Esophagus muscularis mucosa (tissue), 4 donors: ENCODE measurements at regions of chr20 and their contacts with region 1.

Region 1: DNA sequence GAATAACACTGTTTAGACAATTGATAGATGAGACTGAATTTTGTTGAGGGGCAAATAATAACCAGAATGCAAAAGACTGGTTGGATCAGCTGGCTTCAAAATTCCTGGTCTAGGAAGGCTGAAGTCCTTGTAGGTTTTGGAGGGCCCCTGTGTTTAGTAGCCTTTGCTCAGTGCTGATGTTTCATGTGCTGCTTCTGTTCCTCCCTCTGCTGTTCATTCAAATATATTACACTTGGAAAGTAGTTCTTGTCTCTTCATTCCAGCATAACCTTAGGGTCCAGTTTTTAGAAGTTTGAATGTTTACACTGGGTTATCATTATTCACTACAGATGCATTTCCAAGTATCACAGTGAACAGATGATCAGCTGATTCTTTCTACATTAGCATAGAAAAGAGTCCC is 72.5 kb downstream of the FLRT3 start:
- DNase-seq: no peak
- H3K4me3 ChIP-seq: no peak overlapping the region
- H3K27ac ChIP-seq: no peak overlapping the region
- H3K4me1 ChIP-seq: peaks cover 0 to 11% (median 0%) of the 10 kb centered on the region in 4 donors
- H3K27me3 ChIP-seq: no peaks in the 10 kb centered on the region
- CTCF ChIP-seq: peak in 2 of 3 experiments; percentile 26 to 36
- EP300 ChIP-seq: no peak
- POLR2A ChIP-seq: no peak

Region 2: GRCh38 chr20:14189794-14190402 is 75.0 kb before region 1 on chr20:
- intact Hi-C with region 1: loop called (anchors 5 kb)
- DNase-seq: no peak
- H3K4me3 ChIP-seq: no peak overlapping the region
- H3K27ac ChIP-seq: no peak overlapping the region
- H3K4me1 ChIP-seq: no peaks in the 10 kb centered on the region
- H3K27me3 ChIP-seq: no peaks in the 10 kb centered on the region
- CTCF ChIP-seq: peak in 1 of 3 experiments; percentile 32
- EP300 ChIP-seq: no peak
- POLR2A ChIP-seq: no peak